AG04450 (cell line): ENCODE measurements at regions of chr2 and their contacts with region 1.

Region 1: GRCh38 chr2:101012706-101013181 is 10.7 kb downstream of the RPL31 start:
- DNase-seq: no peak
- H3K4me3 ChIP-seq: no peak overlapping the region
- H3K27ac ChIP-seq: no peak overlapping the region
- H3K27me3 ChIP-seq: no peaks in the 10 kb centered on the region
- CTCF ChIP-seq: peak; percentile 83

Region 2: DNA sequence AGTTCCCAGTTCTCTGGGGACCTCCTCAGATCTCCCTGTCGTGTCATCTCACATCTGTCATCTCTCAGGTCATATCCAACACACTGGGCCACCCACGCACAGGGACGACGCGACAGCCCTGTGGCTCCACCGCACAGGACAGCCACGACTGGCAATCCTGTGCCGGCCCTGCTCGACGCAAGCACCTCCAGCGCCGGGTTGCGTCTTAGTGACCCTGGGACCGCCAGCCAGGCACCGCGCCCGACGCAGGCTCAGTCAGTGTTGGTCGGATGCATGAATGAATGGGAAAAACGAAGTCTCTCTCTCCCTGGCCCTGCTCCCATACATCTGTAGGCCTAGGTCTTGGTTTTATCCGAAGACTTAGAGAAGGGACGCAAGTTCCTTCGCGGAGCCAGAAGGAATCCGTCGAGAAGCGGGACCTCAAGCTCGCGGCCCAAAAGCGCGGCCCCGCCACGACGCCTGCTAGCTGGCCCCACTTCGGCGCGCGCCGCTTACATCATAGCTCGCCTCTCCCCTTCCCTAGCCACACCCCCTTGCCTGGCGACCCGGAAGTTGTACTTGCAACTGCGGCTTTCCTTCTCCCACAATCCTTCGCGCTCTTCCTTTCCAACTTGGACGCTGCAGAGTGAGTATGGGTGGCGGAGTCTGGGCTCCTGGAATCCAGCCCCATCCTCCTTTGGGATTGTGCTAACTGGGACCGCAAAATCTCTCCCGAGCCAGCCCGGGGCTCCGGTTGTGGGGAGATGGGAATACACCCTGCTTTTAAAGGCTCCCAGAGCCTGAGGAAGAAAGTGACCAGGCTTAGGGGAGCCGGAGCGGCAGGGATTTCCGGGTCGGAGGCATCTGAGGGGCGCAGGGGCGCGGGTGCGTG is 10.8 kb before region 1 on chr2 and contains the start of gene RPL31:
- CTCF ChIA-PET with region 1: interaction called, 32 read pairs
- POLR2A ChIA-PET with region 1: interaction called, 6 read pairs
- DNase-seq: peak; percentile 90
- H3K4me3 ChIP-seq: peak within 1 kb of the TSS; percentile 96
- H3K27ac ChIP-seq: peak within 1 kb of the TSS; percentile 88
- H3K27me3 ChIP-seq: no peaks in the 10 kb centered on the region
- CTCF ChIP-seq: no peak
- polyA plus RNA-seq, gene RPL31: 2,534 and 2,992 TPM in 2 replicates

Region 3: GRCh38 chr2:101151141-101151858 is 138.6 kb after region 1 on chr2 and contains the start of gene TBC1D8:
- CTCF ChIA-PET with region 1: interaction called, 12 read pairs
- POLR2A ChIA-PET with region 1: no interaction called
- DNase-seq: peak; percentile 26
- H3K4me3 ChIP-seq: peak within 1 kb of the TSS; percentile 71
- H3K27ac ChIP-seq: peak within 1 kb of the TSS; percentile 11
- H3K27me3 ChIP-seq: peaks cover 26% of the 10 kb centered on the region
- CTCF ChIP-seq: no peak
- polyA plus RNA-seq, gene TBC1D8: 2.3 and 2.5 TPM in 2 replicates